ENCODE measurements at regions of chr18 and their contacts with region 1.

Region 1: GRCh38 chr18:32158108-32158624 is 31.7 kb upstream of the MEP1B start:
- DNase-seq: peak; percentile 89
- ATAC-seq: peak; percentile 100
- H3K4me3 ChIP-seq: no peak overlapping the region
- H3K27ac ChIP-seq: no peak overlapping the region
- H3K4me1 ChIP-seq: no peaks in the 10 kb centered on the region
- H3K27me3 ChIP-seq: no peaks in the 10 kb centered on the region; the same call in none of the 2 replicates
- CTCF ChIP-seq: peak; percentile 94
- POLR2A ChIP-seq: no peak
- RAD21 ChIP-seq: peak; percentile 92

Region 2: DNA sequence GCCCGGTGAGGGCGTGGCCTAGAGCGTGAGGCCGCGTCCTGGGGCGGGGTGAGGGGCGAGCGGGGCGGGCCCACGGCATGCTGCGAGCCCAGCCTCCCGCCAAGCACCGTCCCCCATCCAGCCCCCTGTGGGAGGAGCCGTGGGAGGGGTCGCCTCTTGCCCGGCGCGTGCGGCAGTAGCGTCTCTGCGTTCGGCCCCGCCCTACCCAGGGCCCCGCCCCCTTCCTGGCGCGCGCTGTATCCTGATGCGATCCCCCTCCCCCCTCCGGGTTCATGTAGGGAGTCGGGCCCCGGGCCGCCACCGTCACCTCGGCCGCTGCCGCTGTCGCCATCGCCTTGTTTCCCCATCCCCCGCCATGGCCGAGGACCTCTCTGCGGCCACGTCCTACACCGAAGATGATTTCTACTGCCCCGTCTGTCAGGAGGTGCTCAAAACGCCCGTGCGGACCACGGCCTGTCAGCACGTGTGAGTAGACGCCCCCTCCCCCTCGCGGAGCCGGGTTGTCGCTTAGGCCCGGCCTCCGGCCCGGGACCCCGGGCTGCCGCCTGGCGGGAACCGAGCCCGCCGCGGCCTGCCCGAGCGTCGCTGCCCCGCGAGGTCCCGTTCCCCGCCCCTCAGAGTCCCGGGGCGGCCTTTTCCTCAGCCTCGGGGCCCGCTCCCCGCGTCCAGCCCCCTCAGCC is 65.6 kb before region 1 on chr18:
- CTCF ChIA-PET with region 1: interaction called, 5 read pairs
- POLR2A ChIA-PET with region 1: no interaction called
- dilution Hi-C with region 1: no loop called
- in situ Hi-C with region 1: no loop called
- intact Hi-C with region 1: loop called (anchors 2 kb)
- DNase-seq: peak; percentile 94
- ATAC-seq: peak; percentile 97
- H3K4me3 ChIP-seq: peak overlapping the region; percentile 100
- H3K27ac ChIP-seq: peak overlapping the region; percentile 92
- H3K4me1 ChIP-seq: no peaks in the 10 kb centered on the region
- H3K27me3 ChIP-seq: no peaks in the 10 kb centered on the region
- CTCF ChIP-seq: no peak
- POLR2A ChIP-seq: peak; percentile 63; the same call in 1 of the 2 replicates
- RAD21 ChIP-seq: no peak

Region 3: DNA sequence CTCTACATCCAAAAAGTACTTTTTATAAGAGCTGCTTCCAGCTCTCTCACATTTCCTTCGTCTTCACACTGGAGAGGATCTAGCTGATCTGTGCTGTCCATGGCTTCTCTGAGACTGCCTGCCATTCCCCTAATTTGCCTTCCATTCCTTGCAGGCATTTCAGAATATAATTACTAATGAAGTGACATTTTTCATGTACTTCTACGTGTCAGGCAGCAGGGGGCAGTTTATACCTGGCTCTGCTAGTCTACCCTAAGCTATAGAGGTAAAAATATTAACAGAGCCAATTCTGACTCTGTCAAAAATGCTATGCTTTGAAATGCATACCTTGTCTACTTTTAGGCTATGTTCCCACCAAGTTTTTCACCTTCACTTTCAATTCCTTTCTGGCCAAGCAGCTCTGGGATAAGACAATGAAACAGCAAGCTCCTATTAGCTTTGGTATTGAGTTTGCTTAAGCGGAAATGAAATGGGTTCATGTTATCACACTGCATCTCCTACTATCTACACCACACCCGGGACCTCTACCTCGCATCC is 113.6 kb after region 1 on chr18:
- CTCF ChIA-PET with region 1: no interaction called
- POLR2A ChIA-PET with region 1: no interaction called
- dilution Hi-C with region 1: no loop called
- in situ Hi-C with region 1: no loop called
- intact Hi-C with region 1: loop called (anchors 1 kb)
- DNase-seq: peak; percentile 55
- ATAC-seq: peak; percentile 95
- H3K4me3 ChIP-seq: no peak overlapping the region
- H3K27ac ChIP-seq: no peak overlapping the region
- H3K4me1 ChIP-seq: no peaks in the 10 kb centered on the region
- H3K27me3 ChIP-seq: no peaks in the 10 kb centered on the region
- CTCF ChIP-seq: peak; percentile 92
- POLR2A ChIP-seq: no peak
- RAD21 ChIP-seq: peak; percentile 97

Region 4: GRCh38 chr18:32326450-32327309 is 168.5 kb after region 1 on chr18:
- CTCF ChIA-PET with region 1: no interaction called
- POLR2A ChIA-PET with region 1: no interaction called
- dilution Hi-C with region 1: no loop called
- in situ Hi-C with region 1: no loop called
- intact Hi-C with region 1: loop called (anchors 1 kb)
- DNase-seq: peak; percentile 55
- ATAC-seq: peak; percentile 81
- H3K4me3 ChIP-seq: no peak overlapping the region
- H3K27ac ChIP-seq: peak overlapping the region; percentile 11; the same call in 1 of the 2 replicates
- H3K4me1 ChIP-seq: peaks cover 10% of the 10 kb centered on the region
- H3K27me3 ChIP-seq: no peaks in the 10 kb centered on the region
- CTCF ChIP-seq: no peak
- POLR2A ChIP-seq: no peak
- RAD21 ChIP-seq: no peak

Region 5: DNA sequence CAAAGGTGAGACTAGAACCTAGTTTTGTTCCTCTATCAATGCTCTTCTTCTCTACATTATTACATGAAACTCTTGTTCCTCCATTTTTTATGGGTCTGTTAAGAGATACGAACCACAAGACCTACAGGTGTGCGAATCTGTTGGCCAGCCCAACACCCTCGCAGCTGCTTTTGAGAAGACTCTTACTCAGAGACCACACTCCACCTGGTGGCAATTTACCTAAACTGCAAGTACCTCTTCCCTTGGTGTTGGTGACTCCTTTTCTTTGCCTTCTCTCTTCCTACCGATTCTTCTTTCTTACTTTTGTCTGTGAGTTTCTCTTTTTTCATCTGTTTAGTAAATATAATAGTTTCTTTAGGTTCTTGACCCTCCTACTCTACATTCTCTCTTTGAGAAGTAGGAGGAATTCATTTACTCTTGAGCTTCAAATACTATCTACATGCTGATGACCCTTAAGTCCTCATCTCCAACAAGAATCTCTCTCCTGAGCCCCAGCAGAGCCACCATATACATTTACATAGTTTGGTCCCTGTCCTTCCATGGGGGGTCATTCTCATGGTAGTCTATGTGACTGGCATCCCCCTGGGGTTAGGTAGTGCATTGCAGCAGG is 394.4 kb after region 1 on chr18:
- CTCF ChIA-PET with region 1: interaction called, 26 read pairs
- POLR2A ChIA-PET with region 1: no interaction called
- dilution Hi-C with region 1: no loop called
- in situ Hi-C with region 1: loop called (anchors 5 kb)
- intact Hi-C with region 1: loop called (anchors 1 kb)
- DNase-seq: peak; percentile 69
- ATAC-seq: peak; percentile 80
- H3K4me3 ChIP-seq: no peak overlapping the region
- H3K27ac ChIP-seq: no peak overlapping the region
- H3K4me1 ChIP-seq: no peaks in the 10 kb centered on the region
- H3K27me3 ChIP-seq: no peaks in the 10 kb centered on the region
- CTCF ChIP-seq: peak; percentile 78
- POLR2A ChIP-seq: no peak
- RAD21 ChIP-seq: peak; percentile 79

Region 6: DNA sequence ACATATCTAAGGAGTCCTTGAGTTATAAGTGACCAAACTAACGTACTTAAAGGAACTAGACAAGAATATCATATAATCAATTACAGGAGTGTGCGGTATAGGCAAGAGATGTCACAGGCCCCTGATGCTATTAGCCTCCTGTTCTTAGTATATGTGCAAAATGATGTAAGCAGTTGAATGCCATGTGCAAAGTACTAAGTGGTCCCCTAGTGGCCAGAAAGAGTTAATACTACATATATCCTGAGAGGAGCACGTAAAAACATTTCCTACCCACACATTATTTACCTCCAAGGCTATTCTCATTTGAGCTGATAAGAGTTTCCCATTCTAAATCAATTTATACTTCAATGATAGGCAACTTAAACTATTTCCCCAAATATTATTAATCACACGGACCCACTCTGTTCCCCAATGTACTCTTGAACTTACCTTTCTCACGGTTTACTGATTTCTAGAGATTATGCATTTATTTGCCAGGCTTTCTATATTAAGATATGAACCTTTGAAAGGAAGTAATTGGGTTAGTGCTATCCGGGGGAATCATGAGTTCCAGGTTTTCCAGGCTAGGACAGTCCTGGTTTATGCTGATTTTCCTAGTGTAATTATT is 772.6 kb after region 1 on chr18:
- CTCF ChIA-PET with region 1: no interaction called
- POLR2A ChIA-PET with region 1: no interaction called
- dilution Hi-C with region 1: no loop called
- in situ Hi-C with region 1: no loop called
- intact Hi-C with region 1: loop called (anchors 5 kb)
- DNase-seq: peak; percentile 60
- ATAC-seq: peak; percentile 85
- H3K4me3 ChIP-seq: no peak overlapping the region
- H3K27ac ChIP-seq: no peak overlapping the region
- H3K4me1 ChIP-seq: no peaks in the 10 kb centered on the region
- H3K27me3 ChIP-seq: no peaks in the 10 kb centered on the region
- CTCF ChIP-seq: peak; percentile 65
- POLR2A ChIP-seq: no peak
- RAD21 ChIP-seq: peak; percentile 56